Posterior vena cava (tissue), 2 donors: ENCODE measurements at regions of chr19 and their contacts with region 1.

Region 1: DNA sequence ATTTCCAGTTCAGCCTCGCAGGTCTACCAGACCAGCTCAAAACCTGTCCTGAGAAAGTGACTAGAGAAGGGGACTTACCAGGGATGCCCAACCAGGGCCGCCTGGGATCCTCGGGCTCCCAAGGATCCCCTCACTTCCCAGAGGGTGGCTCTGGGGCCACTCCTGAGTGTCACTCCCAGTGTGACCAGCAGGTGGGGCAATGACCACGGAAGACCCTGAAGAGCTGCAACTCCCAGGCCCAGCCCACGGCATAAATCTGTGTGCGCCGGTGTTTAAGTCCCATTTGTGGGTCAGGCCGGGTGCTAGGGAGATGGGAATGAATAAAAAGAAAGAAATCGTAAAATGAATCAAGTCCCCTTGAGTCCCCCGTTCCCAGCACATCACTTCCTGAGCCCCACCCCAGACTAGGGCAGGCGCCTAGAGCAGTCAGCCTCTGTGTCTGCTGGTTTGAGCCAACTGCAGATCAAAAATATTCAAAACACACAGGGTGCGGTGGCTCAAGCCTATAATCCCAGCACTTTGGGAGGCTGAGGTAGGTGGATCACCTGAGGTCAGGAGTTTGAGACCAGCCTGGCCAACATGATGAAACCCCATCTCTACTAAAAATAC is 10.7 kb downstream of the PTGIR start:
- DNase-seq: peak; percentile 94

Region 2: DNA sequence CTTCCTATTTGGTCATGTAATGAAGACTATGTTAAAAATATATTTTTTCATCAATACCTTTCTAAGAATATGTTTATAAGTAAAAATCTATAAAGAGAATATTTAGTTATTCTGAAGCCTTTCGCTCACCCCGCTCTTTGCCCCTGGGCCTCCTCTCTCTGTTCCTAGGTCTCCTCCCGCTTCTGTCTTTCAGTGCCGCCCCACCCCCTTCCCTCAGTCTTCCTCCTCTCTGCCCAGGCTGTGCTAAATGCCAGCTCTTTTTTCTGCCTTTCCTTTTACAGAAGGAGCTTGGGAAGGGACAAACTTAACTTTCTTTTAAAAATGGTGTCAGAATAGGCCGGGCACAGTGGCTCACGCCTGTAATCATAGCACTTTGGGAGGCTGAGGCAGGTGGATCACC is 294.6 kb before region 1 on chr19:
- intact Hi-C with region 1: no loop called
- DNase-seq: no peak

Region 3: GRCh38 chr19:46648060-46648960 is 34.1 kb after region 1 on chr19:
- intact Hi-C with region 1: no loop called
- DNase-seq: no peak

Region 4: DNA sequence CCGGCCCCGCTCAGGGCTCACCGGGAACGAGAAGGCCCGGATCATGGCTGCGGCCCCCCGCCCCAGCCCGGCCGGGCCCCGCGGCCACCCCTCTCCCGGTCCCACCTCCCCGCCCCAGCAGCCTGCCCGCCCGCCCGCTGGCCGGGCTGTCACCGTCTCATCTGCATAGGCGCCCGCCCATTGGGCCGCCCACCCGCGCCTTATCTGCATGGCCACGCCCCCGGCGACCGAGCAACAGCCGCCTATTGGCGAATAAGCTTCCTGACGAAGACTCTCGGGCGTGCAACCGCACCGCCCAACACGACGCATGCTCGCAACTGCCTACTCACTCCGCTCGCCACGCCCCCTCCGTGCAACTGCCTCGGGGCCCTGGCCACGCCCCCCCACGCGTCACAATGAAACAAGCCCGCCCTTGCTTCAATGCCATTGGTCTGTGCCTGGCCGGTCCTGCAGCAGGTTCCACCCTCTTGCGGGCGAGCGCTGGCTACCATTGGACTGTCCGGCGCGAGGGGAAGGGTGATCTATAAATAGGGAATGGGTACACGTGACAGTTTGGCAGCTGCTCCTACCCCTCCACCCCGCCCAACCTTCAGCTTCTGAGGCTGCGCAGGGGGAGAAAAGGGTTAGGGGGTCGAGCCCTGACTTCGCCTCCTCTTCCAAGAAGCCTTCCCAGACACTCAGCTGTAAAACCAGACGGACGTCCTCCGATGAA is 47.0 kb after region 1 on chr19 and contains the start of gene DACT3:
- intact Hi-C with region 1: loop called (anchors 2 to 5 kb)
- DNase-seq: peak; percentile 100
- total RNA-seq, gene DACT3: 72.0 to 122 TPM

Region 5: GRCh38 chr19:46728693-46729676 is 114.8 kb after region 1 on chr19:
- intact Hi-C with region 1: loop called (anchors 10 kb)
- DNase-seq: peak; percentile 94